G401 (cell line): ENCODE measurements at regions of chr10 and their contacts with region 1.

Region 1: GRCh38 chr10:26773633-26774032 is 76.1 kb downstream of the PDSS1 start:
- DNase-seq: no peak

Region 2: GRCh38 chr10:26437637-26438461 is 335.8 kb before region 1 on chr10 and contains the start of gene APBB1IP:
- in situ Hi-C with region 1: no loop called
- DNase-seq: no peak
- total RNA-seq, gene APBB1IP: not detected in 2 replicates

Region 3: DNA sequence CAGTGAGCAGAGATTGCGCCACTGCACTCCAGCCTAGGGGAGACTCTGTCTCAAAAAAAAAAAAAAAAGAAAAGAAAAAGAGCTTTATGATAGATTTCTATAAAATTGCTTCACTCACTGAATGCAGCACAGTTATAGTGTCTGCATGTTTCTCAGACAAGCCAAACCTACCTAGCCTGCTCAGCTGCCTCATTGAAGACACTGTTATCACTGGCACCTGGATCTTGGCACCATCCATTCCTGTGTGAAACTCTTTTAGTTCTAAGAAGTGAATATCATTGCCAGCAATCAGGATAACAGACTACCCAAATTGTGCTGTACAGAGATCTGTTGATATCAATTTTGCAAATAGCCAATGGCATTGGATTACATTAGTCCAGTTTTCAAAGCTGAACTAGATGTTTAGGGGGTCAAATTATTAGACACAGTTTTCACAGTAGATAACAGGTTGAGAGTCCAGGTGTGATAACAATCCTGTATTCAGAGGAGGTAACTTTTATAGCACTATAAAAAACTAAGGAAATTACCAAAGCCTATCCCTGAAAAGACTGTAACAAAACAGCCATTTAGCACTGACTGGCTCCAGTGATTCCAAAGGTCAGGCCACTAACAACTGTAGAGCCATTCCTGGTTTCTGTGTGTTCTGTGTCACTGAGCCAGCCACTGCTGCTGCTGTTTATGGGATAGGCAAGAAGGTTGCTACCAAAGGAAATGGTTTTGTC is 59.1 kb before region 1 on chr10:
- in situ Hi-C with region 1: no loop called
- DNase-seq: no peak

Region 4: DNA sequence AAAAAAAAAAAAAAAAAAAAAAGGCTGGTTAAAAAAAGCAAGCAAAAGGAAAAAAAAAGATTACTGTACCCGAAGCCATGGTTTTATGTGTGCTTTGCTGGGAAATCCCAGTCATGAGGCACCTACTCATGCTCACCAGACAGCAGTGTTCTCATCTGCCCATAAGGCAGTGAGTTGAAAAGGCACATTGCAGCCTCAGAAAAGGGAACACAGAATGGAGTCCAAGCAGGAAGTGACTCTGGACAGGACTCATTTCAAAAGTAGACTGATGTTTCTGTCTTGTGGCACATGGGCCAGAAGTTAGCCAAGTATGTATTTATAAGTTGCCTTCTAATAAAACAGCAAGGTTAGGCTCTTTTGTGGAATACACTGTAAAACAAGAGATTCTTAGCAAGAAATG is 35.9 kb before region 1 on chr10:
- in situ Hi-C with region 1: loop called (anchors 5 kb)
- DNase-seq: no peak